Left colon (tissue), 2 donors: ENCODE measurements at regions of chr9 and their contacts with region 1.

Region 1: GRCh38 chr9:127586537-127586936 is 25.5 kb upstream of the STXBP1 start:
- DNase-seq: peak; percentile 82 to 87
- ATAC-seq: peak; percentile 66

Region 2: DNA sequence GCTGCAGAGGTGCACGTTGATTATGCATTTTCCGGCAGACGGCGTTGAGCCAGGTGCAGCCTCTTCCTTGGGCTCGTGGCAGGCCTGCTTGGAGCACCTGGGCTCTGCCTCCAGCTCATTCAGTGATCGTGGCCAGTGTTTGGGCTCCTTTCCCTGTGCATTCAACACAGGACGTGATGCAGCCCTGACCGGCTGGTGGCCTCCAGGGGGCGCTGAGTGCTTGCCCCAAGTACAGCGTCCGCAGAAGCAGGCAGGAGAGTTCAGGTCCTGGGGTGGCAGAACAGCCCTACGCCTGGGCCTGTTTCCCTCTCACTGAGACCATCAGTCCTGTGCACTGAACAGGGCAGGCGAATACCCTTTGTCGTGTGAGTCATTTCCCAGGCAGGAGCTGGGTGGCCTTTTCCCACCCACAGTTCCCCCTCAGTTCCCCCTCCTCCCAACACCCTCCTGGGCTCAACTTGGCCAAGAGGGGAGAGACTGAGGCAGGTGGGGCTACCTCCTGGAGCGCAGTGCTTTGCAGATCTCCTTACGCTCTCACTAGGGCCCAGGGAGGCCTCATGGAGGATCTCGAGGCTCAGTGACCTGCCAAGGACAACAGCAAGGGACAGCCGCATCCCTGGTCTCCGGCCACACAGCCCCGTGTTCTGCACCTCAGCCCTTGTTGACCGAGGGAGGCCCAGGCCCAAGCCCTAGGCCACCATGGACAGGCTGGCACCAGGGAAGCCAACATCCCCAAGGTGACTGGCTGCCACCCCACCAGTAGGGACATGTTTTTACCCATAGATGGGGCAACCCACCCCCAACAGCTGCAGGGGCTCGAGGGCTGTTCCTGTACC is 82.4 kb before region 1 on chr9:
- intact Hi-C with region 1: loop called (anchors 2 to 5 kb)
- DNase-seq: peak; percentile 80 to 92
- ATAC-seq: peak; percentile 82

Region 3: GRCh38 chr9:127519301-127520166 is 67.0 kb before region 1 on chr9:
- intact Hi-C with region 1: no loop called
- DNase-seq: peak in 1 of 2 donors; percentile 14
- ATAC-seq: no peak

Region 4: GRCh38 chr9:127534250-127534906 is 52.2 kb before region 1 on chr9:
- intact Hi-C with region 1: no loop called
- DNase-seq: no peak
- ATAC-seq: no peak

Region 5: GRCh38 chr9:127545196-127546124 is 41.1 kb before region 1 on chr9:
- intact Hi-C with region 1: no loop called
- DNase-seq: peak; percentile 69 to 76
- ATAC-seq: peak; percentile 85